AG04449 (cell line): ENCODE measurements at regions of chr12 and their contacts with region 1.

Region 1: GRCh38 chr12:63843721-63844390 is 644 bp upstream of the SRGAP1 start:
- DNase-seq: peak; percentile 54
- H3K4me3 ChIP-seq: peak overlapping the region; percentile 96
- CTCF ChIP-seq: peak; percentile 98

Region 2: GRCh38 chr12:63808631-63809030 is 35.2 kb before region 1 on chr12:
- CTCF ChIA-PET with region 1: no interaction called
- POLR2A ChIA-PET with region 1: no interaction called
- DNase-seq: no peak
- H3K4me3 ChIP-seq: no peak overlapping the region
- CTCF ChIP-seq: no peak

Region 3: DNA sequence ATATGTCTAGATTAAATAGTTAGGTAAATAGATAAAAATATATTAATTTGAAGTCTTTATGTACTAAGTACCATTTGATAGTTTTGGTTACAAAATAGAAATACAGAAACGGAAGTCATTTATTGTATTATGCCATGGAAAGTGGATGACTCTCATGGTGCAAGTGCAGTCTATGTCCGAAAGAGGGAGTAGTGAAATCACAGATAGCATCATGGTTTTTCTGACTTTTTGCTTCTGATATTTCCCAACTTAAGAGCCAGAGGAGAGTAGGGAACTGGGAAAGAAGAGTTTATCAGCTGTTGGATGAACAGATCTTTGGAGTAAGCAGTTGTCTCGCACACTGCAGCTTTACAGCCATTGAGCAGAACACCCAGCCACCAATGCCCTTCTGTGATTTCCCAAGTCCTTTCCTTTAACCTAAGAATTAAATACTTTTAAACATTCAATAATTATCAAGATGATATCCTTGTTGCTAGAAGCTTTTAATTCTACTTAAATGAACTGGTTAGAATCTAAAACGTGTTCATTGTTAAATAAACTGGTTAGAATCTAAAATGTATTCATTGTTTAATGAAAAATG is 17.8 kb before region 1 on chr12:
- CTCF ChIA-PET with region 1: interaction called, 18 read pairs
- POLR2A ChIA-PET with region 1: no interaction called
- DNase-seq: no peak
- H3K4me3 ChIP-seq: no peak overlapping the region
- CTCF ChIP-seq: peak; percentile 71

Region 4: DNA sequence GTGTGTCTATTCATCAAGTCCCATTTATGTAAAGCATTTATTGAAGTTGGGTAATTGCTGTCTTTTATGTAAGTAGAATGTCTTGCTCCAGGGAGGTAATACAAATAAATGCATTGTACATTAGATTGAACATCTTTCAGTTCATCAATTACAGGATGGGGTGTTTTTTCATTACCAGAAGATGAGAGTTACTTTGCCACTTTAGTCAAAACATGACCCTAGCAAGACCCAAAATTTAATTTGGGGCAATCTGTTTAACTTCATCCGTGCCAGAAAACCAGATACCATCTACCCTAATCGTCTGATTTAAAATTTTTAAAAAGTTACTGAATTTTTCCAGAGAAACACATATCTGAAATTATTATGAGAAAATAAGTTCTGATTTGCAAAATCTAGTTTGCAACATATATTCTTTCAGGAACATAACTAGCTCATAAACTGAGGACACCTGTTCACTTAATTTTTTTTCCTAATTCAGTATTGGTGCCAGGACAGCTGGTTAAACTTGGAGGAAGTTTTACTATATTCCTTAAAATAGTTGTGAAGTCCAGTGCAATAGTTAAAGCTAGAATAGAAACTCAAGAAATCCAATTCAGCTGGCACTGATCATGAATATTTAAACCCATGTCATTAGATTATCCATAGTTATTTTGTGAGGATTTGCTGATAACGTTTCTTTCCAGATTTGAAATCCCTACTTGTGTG is 115.2 kb after region 1 on chr12:
- CTCF ChIA-PET with region 1: no interaction called
- POLR2A ChIA-PET with region 1: no interaction called
- DNase-seq: no peak
- H3K4me3 ChIP-seq: no peak overlapping the region
- CTCF ChIP-seq: no peak

Region 5: DNA sequence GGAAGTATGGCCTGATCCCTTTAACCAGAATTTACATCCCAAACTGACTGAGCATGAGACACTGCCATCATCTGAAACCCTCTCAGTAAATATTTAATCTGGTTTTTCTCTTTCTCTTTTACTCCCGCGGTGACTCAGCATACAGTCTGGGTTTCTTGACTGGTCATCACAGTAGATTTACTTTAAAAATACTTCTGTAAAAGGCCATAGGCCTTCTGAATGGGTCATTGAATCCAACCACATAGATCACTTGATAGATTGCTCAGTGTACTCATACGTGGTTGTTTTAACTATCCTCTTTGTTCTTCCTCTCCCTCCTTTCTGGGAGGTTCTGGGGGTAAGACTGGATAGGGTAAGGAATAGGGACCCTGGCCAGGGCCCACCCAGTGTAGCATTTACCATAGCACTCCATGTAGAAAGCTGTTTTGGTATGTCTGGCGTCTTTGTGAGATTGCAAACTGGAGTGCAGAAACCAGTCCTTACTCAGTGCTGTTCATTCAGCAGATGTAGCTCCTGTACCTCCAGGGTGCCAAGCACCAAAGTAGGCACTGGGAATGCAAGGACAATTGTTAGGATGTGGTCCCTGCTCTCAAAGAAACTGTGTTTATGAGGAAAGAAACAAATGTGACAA is 166.3 kb after region 1 on chr12:
- CTCF ChIA-PET with region 1: interaction called, 25 read pairs
- POLR2A ChIA-PET with region 1: interaction called, 5 read pairs
- DNase-seq: no peak
- H3K4me3 ChIP-seq: no peak overlapping the region
- CTCF ChIP-seq: no peak

Region 6: GRCh38 chr12:64099397-64099796 is 255.5 kb after region 1 on chr12:
- CTCF ChIA-PET with region 1: interaction called, 23 read pairs
- POLR2A ChIA-PET with region 1: no interaction called
- DNase-seq: peak; percentile 36
- H3K4me3 ChIP-seq: no peak overlapping the region
- CTCF ChIP-seq: no peak

Region 7: GRCh38 chr12:64236549-64236948 is 392.7 kb after region 1 on chr12:
- CTCF ChIA-PET with region 1: interaction called, 28 read pairs
- POLR2A ChIA-PET with region 1: no interaction called
- DNase-seq: no peak
- H3K4me3 ChIP-seq: no peak overlapping the region
- CTCF ChIP-seq: peak; percentile 20

Region 8: DNA sequence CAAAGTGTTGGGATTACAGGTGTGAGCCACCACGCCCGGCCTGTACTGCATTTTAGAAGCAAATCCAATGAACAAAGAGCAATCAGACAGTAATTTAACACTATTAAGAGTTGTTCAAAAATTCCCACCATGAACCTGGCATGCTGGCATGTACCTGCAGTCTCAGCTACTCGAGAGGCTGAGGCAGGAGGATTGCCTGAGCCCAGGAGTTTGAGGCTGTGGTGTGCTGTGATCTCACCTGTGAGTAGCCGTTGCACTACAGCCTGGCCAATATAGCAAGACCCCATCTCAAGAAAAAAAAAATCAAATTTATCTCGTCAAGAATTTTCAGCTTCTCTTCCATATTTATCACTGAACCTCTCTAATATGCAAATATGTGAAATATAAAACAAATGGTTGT is 418.0 kb after region 1 on chr12:
- CTCF ChIA-PET with region 1: interaction called, 187 read pairs
- POLR2A ChIA-PET with region 1: interaction called, 3 read pairs
- DNase-seq: no peak
- H3K4me3 ChIP-seq: no peak overlapping the region
- CTCF ChIP-seq: no peak